Caco-2 (cell line): ENCODE measurements at regions of chr15 and their contacts with region 1.

Region 1: DNA sequence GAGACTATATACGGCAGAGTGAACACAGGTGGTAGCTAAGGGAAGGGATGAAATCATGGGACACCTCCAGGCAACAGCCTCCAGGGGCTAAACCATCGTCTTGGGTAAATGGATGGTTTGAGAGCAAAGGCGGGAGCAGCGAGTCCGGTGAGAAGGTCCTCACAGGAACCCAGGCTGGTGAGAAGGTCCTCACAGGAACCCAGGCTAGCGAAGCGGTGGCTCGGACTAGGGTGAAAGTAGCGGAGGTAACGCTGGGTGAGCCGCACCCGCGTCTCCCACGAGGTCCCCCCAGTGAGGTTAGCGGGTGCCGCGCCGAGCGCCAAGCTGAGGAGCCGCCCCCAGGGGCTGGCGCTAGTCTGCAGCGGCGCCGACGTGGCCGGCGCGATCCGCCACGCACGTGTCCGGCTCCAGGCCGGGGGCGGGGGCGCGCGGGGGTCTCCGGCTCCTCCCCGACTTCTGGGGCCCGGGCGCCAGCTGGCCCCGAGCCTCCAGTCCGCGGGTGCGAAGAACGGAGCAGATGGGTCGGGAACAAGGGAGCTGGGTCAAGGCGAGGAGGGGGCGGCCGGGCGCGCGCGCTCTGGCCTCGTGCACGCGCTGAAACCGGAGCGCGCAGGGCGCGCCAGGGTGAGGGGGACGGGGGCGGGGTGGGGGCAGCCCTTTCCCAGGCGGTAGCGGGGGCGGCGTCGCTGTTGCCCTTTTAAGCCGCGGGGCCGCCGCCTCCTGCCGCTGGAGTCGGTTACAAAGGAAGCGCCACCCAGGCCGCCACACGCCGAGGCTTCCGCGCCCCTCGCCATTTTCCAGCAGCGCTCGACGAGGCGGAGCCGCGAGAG is at the start of gene UBE2Q2:
- DNase-seq: peak; percentile 81 to 88
- H3K4me3 ChIP-seq: peak within 1 kb of the TSS; percentile 97
- H3K4me3 Mint-ChIP-seq: peak within 1 kb of the TSS; percentile 92
- H3K27ac Mint-ChIP-seq: peak within 1 kb of the TSS; percentile 92
- H3K4me1 ChIP-seq: peaks cover 12% of the 10 kb centered on the region; the same call in 1 of the 2 replicates
- H3K4me1 Mint-ChIP-seq: peaks cover 29% of the 10 kb centered on the region
- H3K27me3 ChIP-seq: no peaks in the 10 kb centered on the region
- H3K27me3 Mint-ChIP-seq: no peaks in the 10 kb centered on the region
- CTCF ChIP-seq: no peak
- total RNA-seq, gene UBE2Q2: 40.5 and 41.9 TPM in 2 replicates

Region 2: DNA sequence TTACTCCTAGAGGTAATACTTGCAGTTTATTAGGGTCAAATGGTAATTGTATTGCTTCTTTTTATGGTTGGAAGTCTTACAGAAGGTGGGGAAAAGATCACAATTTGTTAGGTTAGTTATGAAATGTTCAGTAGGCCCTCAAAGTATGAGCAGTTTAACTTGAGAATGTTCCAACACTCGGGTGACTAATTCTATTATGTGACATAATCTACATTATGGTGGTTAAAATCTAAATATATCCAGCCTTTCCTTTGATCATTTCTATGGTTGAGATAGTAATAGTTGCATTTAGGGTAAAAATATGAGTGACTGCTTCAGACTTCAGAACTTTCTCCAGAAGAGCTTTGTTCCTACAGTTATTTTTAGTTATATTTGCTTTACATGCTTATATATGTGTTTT is 41.1 kb after region 1 on chr15:
- CTCF ChIA-PET with region 1: no interaction called
- POLR2A ChIA-PET with region 1: no interaction called
- intact Hi-C with region 1: loop called (anchors 5 kb)
- DNase-seq: no peak
- H3K4me3 ChIP-seq: no peak overlapping the region
- H3K4me3 Mint-ChIP-seq: no peak overlapping the region
- H3K27ac Mint-ChIP-seq: no peak overlapping the region
- H3K4me1 ChIP-seq: peaks cover 27% of the 10 kb centered on the region
- H3K4me1 Mint-ChIP-seq: peaks cover 11% of the 10 kb centered on the region
- H3K27me3 ChIP-seq: no peaks in the 10 kb centered on the region
- H3K27me3 Mint-ChIP-seq: no peaks in the 10 kb centered on the region
- CTCF ChIP-seq: no peak

Region 3: DNA sequence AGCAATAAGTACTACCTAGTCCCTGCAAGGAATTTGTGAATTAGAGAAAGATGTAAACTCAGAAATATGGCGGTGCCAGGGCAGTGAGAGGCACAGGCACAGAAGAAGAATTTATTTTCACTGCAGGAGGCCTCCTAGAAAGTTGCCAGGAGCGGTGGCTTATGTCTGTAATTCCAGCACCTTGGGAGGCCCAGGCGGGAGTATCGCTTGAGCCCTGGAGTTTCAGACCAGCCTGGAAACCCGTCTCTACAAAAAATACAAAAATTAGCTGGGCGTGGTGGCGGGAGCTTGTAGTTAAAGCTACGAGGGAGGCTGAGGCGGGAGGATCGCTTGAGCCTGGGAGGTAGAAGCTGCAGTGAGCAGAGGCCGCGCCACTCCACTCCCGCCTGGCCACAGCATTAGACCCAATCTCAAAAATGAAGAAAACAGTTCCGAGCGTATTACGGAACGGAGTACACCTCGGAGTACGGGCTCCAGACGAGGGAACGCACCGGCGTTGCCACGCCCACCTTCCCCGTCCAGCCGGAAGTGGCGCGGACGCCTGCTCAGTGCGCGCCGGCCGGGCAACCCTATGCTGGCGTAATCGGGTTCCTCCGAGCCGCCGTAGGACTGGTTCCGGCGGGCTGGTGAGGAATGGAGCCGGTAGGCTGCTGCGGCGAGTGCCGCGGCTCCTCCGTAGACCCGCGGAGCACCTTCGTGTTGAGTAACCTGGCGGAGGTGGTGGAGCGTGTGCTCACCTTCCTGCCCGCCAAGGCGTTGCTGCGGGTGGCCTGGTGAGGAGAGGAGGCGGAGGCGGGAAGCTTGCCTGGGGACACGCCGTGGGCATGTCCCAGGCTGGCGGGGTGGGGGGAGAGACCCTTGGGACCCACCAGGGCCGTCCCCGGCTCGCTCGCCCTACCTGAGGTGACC is 60.6 kb after region 1 on chr15 and contains the start of gene FBXO22:
- CTCF ChIA-PET with region 1: no interaction called
- POLR2A ChIA-PET with region 1: interaction called, 4 read pairs
- intact Hi-C with region 1: loop called (anchors 5 kb)
- DNase-seq: peak; percentile 89 to 94
- H3K4me3 ChIP-seq: peak within 1 kb of the TSS; percentile 83
- H3K4me3 Mint-ChIP-seq: peak within 1 kb of the TSS; percentile 99
- H3K27ac Mint-ChIP-seq: peak within 1 kb of the TSS; percentile 98
- H3K4me1 ChIP-seq: peaks cover 17% of the 10 kb centered on the region
- H3K4me1 Mint-ChIP-seq: peaks cover 10% of the 10 kb centered on the region
- H3K27me3 ChIP-seq: no peaks in the 10 kb centered on the region
- H3K27me3 Mint-ChIP-seq: no peaks in the 10 kb centered on the region
- CTCF ChIP-seq: no peak
- total RNA-seq, gene FBXO22: 43.9 and 47.7 TPM in 2 replicates